Activated CD4-positive, alpha-beta memory T cell treated with anti-CD3 and anti-CD28 coated beads, Interleukin-2, amount 10 ng/mL, durations not matched to agents 7 days and 5 days (primary cell): ENCODE measurements at regions of chr14 and their contacts with region 1.

Region 1: DNA sequence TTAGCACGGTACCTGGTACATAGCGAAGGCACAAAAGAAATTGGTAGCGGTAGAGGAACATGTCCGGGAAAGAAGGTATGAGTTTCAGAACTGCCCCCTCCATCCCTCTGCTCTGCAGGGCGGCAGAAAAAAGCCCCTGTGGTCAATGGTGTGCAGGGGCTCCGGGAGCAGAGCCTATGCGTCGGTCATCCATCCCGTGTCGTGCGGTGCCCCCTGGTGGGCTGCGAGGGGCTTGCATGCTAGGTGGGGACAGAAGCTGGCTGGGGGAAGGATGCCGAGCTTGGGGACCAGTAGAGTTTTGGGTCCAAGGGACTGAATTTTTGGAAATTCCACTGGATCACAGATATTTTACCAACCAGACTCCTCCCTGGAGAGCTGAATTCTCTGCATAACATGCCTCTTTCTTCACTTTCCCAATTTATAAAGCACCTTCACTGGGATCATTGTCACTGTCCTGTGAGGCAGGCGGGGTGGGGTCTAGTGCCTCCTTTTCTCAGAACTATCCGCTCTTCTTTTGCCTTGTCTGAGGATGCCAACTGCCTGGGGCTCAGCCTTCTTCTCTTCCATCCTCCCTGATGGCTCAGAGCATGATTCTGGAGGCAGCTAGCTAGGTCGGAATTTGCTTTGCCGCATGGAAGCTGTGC is 148.7 kb downstream of the SMOC1 start:
- DNase-seq: peak; percentile 65
- H3K4me3 Mint-ChIP-seq: no peak overlapping the region
- H3K27ac Mint-ChIP-seq: no peak overlapping the region
- H3K4me1 Mint-ChIP-seq: no peaks in the 10 kb centered on the region
- H3K27me3 Mint-ChIP-seq: peaks cover 11% of the 10 kb centered on the region

Region 2: GRCh38 chr14:69818757-69819191 is 209.1 kb before region 1 on chr14:
- CTCF ChIA-PET with region 1: interaction called, 26 read pairs
- POLR2A ChIA-PET with region 1: no interaction called
- DNase-seq: peak; percentile 50
- H3K4me3 Mint-ChIP-seq: no peak overlapping the region
- H3K27ac Mint-ChIP-seq: no peak overlapping the region
- H3K4me1 Mint-ChIP-seq: peaks cover 2% of the 10 kb centered on the region
- H3K27me3 Mint-ChIP-seq: peaks cover 11% of the 10 kb centered on the region

Region 3: DNA sequence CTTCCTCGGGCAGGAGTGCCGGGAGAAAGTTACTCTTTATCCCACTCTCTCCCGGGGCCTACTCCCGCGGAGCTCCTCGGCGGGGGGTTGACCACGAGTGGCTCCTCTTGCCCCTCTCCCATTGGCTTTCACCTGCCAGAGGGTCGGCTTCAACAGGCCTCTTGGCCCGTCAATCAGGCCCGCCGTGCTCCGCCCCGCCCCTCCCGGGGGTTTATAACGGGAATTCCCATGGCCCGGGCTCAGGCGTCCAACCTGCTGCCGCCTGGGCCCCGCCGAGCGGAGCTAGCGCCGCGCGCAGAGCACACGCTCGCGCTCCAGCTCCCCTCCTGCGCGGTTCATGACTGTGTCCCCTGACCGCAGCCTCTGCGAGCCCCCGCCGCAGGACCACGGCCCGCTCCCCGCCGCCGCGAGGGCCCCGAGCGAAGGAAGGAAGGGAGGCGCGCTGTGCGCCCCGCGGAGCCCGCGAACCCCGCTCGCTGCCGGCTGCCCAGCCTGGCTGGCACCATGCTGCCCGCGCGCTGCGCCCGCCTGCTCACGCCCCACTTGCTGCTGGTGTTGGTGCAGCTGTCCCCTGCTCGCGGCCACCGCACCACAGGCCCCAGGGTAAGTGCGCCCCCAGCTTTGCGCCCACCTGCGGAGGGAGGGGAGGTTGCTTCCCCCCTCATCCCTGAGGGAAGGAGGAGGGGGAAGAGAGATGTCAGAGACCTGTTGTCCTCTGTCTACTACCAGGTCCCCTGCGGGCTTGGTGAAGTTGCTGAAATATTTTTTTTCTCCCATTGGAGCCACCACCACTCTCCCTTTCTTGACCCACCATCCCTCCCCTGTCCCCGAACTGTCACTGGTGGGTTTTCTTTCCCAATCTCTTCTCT is 148.5 kb before region 1 on chr14 and contains the start of gene SMOC1:
- CTCF ChIA-PET with region 1: interaction called, 17 read pairs
- POLR2A ChIA-PET with region 1: no interaction called
- DNase-seq: no peak
- H3K4me3 Mint-ChIP-seq: no peak within 1 kb of the TSS
- H3K27ac Mint-ChIP-seq: no peak within 1 kb of the TSS
- H3K4me1 Mint-ChIP-seq: no peaks in the 10 kb centered on the region
- H3K27me3 Mint-ChIP-seq: peaks cover 58% of the 10 kb centered on the region
- total RNA-seq, gene SMOC1: not detected

Region 4: GRCh38 chr14:70130482-70130881 is 102.6 kb after region 1 on chr14:
- CTCF ChIA-PET with region 1: no interaction called
- POLR2A ChIA-PET with region 1: no interaction called
- DNase-seq: no peak
- H3K4me3 Mint-ChIP-seq: no peak overlapping the region
- H3K27ac Mint-ChIP-seq: no peak overlapping the region
- H3K4me1 Mint-ChIP-seq: no peaks in the 10 kb centered on the region
- H3K27me3 Mint-ChIP-seq: peaks cover 23% of the 10 kb centered on the region